Activated naive CD4-positive, alpha-beta T cell treated with anti-CD3 and anti-CD28 coated beads, Interleukin-2, amount 10 ng/mL, durations not matched to agents 7 days and 5 days (primary cell): ENCODE measurements at regions of chr20 and their contacts with region 1.

Region 1: DNA sequence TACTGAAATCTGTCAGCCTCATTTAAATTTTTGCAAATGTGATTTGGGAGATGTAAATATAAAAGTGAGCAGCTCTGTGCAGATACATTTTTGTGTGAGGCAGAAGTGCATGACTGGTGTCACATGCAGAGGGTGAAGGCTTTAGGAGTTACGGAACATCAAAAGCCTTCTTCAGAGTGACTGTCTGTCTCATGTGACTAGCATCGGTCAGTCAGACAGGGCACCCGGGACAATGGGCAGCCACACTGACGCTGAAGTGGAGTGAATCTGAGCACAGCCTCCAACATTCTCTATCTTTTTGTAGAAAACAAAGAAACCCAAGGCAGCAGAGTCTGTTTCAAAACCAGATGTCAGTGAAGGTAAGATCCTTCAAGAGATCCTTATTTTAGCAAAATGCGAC is 7.9 kb upstream of the FAM209A start:
- DNase-seq: no peak
- H3K4me3 Mint-ChIP-seq: no peak overlapping the region
- H3K27ac Mint-ChIP-seq: no peak overlapping the region
- H3K4me1 Mint-ChIP-seq: no peaks in the 10 kb centered on the region
- H3K27me3 Mint-ChIP-seq: no peaks in the 10 kb centered on the region

Region 2: GRCh38 chr20:56400090-56400542 is 116.5 kb before region 1 on chr20:
- CTCF ChIA-PET with region 1: interaction called, 10 read pairs
- DNase-seq: peak; percentile 77
- H3K4me3 Mint-ChIP-seq: no peak overlapping the region
- H3K27ac Mint-ChIP-seq: peak overlapping the region; percentile 9
- H3K4me1 Mint-ChIP-seq: peaks cover 19% of the 10 kb centered on the region
- H3K27me3 Mint-ChIP-seq: no peaks in the 10 kb centered on the region